CD4-positive, alpha-beta memory T cell (primary cell): ENCODE measurements at regions of chr9 and their contacts with region 1.

Region 1: DNA sequence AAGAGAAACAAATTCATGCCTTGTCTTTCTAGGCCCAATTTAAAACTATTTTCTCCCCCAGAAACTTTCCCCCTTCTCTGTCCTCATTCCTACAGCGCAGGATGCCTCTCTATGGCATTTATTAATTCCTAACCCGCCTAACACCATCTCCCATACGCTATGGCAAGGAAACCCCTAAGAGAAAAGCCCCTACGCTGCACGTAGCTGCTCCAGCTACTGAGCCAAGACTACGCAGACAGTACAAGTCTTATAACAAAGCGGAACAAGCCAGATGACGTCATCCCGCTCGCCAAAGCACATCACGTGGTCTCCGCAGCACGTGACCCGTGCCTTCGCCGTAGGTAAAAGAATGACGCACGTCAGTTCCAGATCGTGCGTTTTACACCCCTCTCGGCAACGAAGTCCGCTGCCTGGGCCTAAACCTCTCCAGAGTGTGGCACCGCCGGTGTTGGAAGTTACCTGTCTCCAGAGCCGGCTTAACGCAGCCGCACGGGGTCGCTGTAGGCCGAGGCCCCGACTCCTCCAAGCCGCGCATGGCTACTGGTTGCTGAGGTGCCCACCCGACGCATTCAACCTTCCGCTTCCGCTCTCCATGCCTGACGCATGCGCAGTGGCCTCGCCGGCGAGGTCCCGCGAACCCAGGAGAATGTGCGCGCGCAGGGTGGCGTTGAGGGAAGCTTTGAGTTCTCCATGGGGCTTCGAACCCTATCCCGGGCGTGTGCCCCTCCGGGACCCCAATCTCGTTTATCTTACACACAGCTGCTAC is at the start of gene TRMO:
- DNase-seq: peak; percentile 97 to 100 (median 98)
- H3K4me3 ChIP-seq: peak within 1 kb of the TSS; percentile 64 to 82
- H3K4me3 Mint-ChIP-seq: peak within 1 kb of the TSS; percentile 85 to 100 (median 94)
- H3K27ac ChIP-seq: peak within 1 kb of the TSS; percentile 90
- H3K27ac Mint-ChIP-seq: peak within 1 kb of the TSS; percentile 91 to 100 (median 100)
- H3K4me1 ChIP-seq: peaks cover 53% of the 10 kb centered on the region
- H3K4me1 Mint-ChIP-seq: peaks cover 26 to 54% (median 41%) of the 10 kb centered on the region in 4 donors
- H3K27me3 ChIP-seq: no peaks in the 10 kb centered on the region
- H3K27me3 Mint-ChIP-seq: peaks cover 0 to 1% of the 10 kb centered on the region in 2 donors
- total RNA-seq, gene TRMO: 51.6 to 59.5 TPM

Region 2: GRCh38 chr9:97604901-97605645 is 317.1 kb before region 1 on chr9:
- CTCF ChIA-PET with region 1: no interaction called
- POLR2A ChIA-PET with region 1: no interaction called
- intact Hi-C with region 1: no loop called
- DNase-seq: no peak
- H3K4me3 ChIP-seq: no peak overlapping the region
- H3K4me3 Mint-ChIP-seq: no peak overlapping the region
- H3K27ac ChIP-seq: no peak overlapping the region
- H3K27ac Mint-ChIP-seq: peak overlapping the region in 1 of 7 donors; percentile 48
- H3K4me1 ChIP-seq: no peaks in the 10 kb centered on the region
- H3K4me1 Mint-ChIP-seq: no peaks in the 10 kb centered on the region
- H3K27me3 ChIP-seq: no peaks in the 10 kb centered on the region
- H3K27me3 Mint-ChIP-seq: no peaks in the 10 kb centered on the region

Region 3: DNA sequence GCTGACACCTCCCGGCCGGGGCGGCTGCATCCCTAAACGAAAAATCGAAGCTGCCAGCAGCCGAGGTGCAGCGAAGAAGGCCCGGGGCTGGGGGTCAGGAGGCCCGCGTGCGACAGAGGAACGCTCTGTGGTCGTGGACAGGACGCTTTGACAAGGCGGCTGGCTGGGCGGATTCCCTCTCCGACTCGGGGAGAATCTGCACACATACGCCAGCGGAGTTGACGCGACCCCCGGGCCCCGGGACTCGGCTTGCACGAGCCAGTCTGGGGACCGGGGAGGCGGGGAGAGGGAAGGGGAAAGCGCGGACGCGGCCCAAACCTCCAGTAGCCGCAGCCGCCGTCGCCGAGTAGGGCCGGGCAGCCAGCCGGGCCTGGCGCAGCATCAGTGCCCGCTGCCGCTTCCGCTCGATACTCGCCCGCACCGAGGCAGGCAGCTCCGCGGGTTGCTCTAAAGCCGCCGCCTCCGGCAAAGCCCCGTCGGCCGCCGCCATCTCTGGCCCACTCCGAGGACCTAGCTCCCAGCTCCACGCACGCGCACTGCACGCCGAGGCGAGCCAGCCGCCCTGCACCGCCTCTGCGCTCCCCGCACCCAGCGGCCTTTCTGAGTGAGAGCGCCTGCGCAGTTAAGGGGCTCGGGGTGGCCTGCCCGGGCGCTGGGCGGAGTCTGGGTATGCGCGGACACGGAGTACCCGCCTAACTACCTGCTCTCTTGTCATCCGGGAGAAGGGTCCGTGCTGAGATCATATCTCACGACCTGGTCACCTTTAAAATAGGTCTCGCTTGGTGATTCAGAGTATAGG is 225.1 kb before region 1 on chr9 and contains the start of gene XPA:
- CTCF ChIA-PET with region 1: interaction called, 17 read pairs
- POLR2A ChIA-PET with region 1: interaction called, 26 read pairs
- intact Hi-C with region 1: no loop called
- DNase-seq: peak; percentile 96 to 97 (median 96)
- H3K4me3 ChIP-seq: peak within 1 kb of the TSS; percentile 4 to 82
- H3K4me3 Mint-ChIP-seq: peak within 1 kb of the TSS; percentile 86 to 96 (median 92)
- H3K27ac ChIP-seq: peak within 1 kb of the TSS; percentile 68
- H3K27ac Mint-ChIP-seq: peak within 1 kb of the TSS; percentile 86 to 98 (median 96)
- H3K4me1 ChIP-seq: peaks cover 44% of the 10 kb centered on the region
- H3K4me1 Mint-ChIP-seq: peaks cover 41 to 56% (median 49%) of the 10 kb centered on the region in 4 donors
- H3K27me3 ChIP-seq: no peaks in the 10 kb centered on the region
- H3K27me3 Mint-ChIP-seq: no peaks in the 10 kb centered on the region
- total RNA-seq, gene XPA: 24.0 to 25.5 TPM

Region 4: GRCh38 chr9:97740848-97741821 is 181.0 kb before region 1 on chr9:
- CTCF ChIA-PET with region 1: no interaction called
- POLR2A ChIA-PET with region 1: no interaction called
- intact Hi-C with region 1: no loop called
- DNase-seq: peak in 4 of 5 donors; percentile 12 to 17 (median 15)
- H3K4me3 ChIP-seq: no peak overlapping the region
- H3K4me3 Mint-ChIP-seq: peak overlapping the region; percentile 13 to 64 (median 52)
- H3K27ac ChIP-seq: no peak overlapping the region
- H3K27ac Mint-ChIP-seq: no peak overlapping the region
- H3K4me1 ChIP-seq: peaks cover 11% of the 10 kb centered on the region
- H3K4me1 Mint-ChIP-seq: peaks cover 1 to 11% (median 7%) of the 10 kb centered on the region in 4 donors
- H3K27me3 ChIP-seq: peaks cover 25% of the 10 kb centered on the region
- H3K27me3 Mint-ChIP-seq: peaks cover 36 to 56% of the 10 kb centered on the region in 2 donors

Region 5: GRCh38 chr9:97840521-97840920 is 81.6 kb before region 1 on chr9:
- CTCF ChIA-PET with region 1: no interaction called
- POLR2A ChIA-PET with region 1: no interaction called
- intact Hi-C with region 1: no loop called
- DNase-seq: no peak
- H3K4me3 ChIP-seq: no peak overlapping the region
- H3K4me3 Mint-ChIP-seq: no peak overlapping the region
- H3K27ac ChIP-seq: no peak overlapping the region
- H3K27ac Mint-ChIP-seq: no peak overlapping the region
- H3K4me1 ChIP-seq: no peaks in the 10 kb centered on the region
- H3K4me1 Mint-ChIP-seq: no peaks in the 10 kb centered on the region
- H3K27me3 ChIP-seq: peaks cover 14% of the 10 kb centered on the region
- H3K27me3 Mint-ChIP-seq: peaks cover 37 to 41% of the 10 kb centered on the region in 2 donors

Region 6: DNA sequence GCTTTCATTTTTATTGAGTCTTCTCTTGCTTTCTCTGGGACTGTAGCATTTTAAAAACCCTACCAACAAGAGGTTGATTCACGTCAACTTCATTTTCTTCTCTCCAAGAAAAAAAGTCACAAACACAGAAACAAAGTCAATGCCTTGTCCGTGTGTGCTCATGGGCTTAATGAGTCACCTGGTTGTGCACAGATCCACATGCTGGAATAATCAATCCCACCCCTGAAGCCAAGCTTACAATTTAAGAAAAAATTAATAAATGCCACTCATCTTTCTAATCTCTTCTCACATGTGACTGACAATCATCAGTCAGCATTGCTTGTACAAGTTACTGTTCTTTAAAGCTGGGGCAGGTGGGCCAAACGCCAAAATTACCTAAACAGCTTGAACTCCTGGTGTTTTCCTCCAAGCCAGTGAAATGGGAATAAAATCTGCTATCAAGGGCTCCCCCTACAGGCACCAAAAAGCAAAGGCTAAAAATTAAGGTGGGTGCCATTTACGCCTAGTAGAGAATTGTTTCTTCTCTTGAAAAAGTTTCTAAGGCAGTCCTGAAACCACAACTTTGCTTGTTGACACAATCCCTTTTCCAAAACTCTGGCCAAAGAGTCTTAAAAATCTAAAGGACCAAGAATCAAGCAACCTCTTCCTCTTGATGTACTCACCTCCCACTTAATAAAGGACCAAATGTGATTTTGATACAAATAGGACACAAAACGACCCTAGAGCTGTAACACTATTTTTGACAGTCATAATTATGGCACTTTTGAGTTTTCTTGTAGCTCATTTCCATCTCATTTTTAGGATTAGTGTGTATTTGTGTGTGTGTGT is 21.2 kb before region 1 on chr9:
- CTCF ChIA-PET with region 1: interaction called, 174 read pairs
- POLR2A ChIA-PET with region 1: interaction called, 746 read pairs
- intact Hi-C with region 1: loop called (anchors 1 kb)
- DNase-seq: peak; percentile 39 to 54 (median 43)
- H3K4me3 ChIP-seq: no peak overlapping the region
- H3K4me3 Mint-ChIP-seq: peak overlapping the region in 3 of 8 donors; percentile 20 to 59 (median 43)
- H3K27ac ChIP-seq: peak overlapping the region; percentile 21
- H3K27ac Mint-ChIP-seq: peak overlapping the region; percentile 75 to 93 (median 92)
- H3K4me1 ChIP-seq: peaks cover 59% of the 10 kb centered on the region
- H3K4me1 Mint-ChIP-seq: peaks cover 33 to 63% (median 45%) of the 10 kb centered on the region in 4 donors
- H3K27me3 ChIP-seq: no peaks in the 10 kb centered on the region
- H3K27me3 Mint-ChIP-seq: no peaks in the 10 kb centered on the region

Region 7: DNA sequence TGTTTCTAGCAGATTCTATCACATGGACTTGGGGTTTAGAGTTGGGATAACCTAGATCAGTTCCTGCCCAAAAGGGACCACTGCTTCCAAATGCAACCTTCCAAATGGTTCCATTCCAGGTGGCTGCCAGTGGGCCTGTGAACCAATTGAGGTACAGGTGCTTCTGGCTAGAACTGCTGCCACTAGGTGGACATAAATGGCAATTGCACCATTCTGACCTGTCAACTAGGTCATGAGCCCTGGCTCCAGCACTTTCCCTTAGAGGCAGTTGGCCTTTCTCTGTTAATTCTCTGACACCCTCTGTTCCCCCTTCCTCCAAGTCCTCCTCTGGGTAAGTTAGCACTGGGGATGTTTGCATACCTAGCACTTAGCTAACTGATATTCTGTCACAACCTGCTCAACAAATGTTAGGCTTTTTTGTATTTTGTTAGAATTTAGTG is 32.4 kb after region 1 on chr9:
- CTCF ChIA-PET with region 1: interaction called, 256 read pairs
- POLR2A ChIA-PET with region 1: interaction called, 47 read pairs
- intact Hi-C with region 1: loop called (anchors 1 kb)
- DNase-seq: peak; percentile 60 to 65 (median 64)
- H3K4me3 ChIP-seq: no peak overlapping the region
- H3K4me3 Mint-ChIP-seq: no peak overlapping the region
- H3K27ac ChIP-seq: no peak overlapping the region
- H3K27ac Mint-ChIP-seq: no peak overlapping the region
- H3K4me1 ChIP-seq: peaks cover 6% of the 10 kb centered on the region
- H3K4me1 Mint-ChIP-seq: peaks cover 0 to 10% (median 2%) of the 10 kb centered on the region in 4 donors
- H3K27me3 ChIP-seq: no peaks in the 10 kb centered on the region
- H3K27me3 Mint-ChIP-seq: no peaks in the 10 kb centered on the region

Region 8: GRCh38 chr9:98034593-98035546 is 112.7 kb after region 1 on chr9:
- CTCF ChIA-PET with region 1: interaction called, 121 read pairs
- POLR2A ChIA-PET with region 1: interaction called, 28 read pairs
- intact Hi-C with region 1: loop called (anchors 1 kb)
- DNase-seq: peak; percentile 80 to 88 (median 84)
- H3K4me3 ChIP-seq: no peak overlapping the region
- H3K4me3 Mint-ChIP-seq: peak overlapping the region in 3 of 8 donors; percentile 32 to 64 (median 38)
- H3K27ac ChIP-seq: no peak overlapping the region
- H3K27ac Mint-ChIP-seq: peak overlapping the region in 5 of 7 donors; percentile 28 to 64 (median 61)
- H3K4me1 ChIP-seq: peaks cover 6% of the 10 kb centered on the region
- H3K4me1 Mint-ChIP-seq: peaks cover 6 to 9% (median 6%) of the 10 kb centered on the region in 4 donors
- H3K27me3 ChIP-seq: no peaks in the 10 kb centered on the region
- H3K27me3 Mint-ChIP-seq: peaks cover 1 to 4% of the 10 kb centered on the region in 2 donors

Region 9: DNA sequence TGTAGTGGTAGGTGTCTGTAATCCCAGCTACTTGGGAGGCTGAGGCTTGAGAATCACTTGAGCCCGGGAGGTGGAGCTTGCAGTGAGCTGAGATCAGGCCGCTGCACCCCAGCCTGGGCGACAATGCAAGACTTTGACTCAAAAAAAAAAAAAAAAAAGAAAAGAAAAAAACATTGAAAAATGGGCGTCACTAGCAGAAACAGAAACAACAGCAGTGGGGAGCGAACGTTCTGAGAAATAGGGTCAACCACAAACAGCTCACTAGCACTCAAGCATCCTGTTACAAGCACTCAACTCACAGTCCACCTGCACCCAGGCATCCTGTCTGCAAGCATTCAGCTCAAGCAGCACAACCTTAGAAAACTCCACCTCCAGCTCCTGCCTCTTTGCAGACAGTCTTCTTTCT is 179.7 kb after region 1 on chr9:
- CTCF ChIA-PET with region 1: interaction called, 3 read pairs
- POLR2A ChIA-PET with region 1: interaction called, 15 read pairs
- intact Hi-C with region 1: no loop called
- DNase-seq: peak; percentile 85 to 95 (median 94)
- H3K4me3 ChIP-seq: peak overlapping the region in 1 of 2 donors; percentile 40
- H3K4me3 Mint-ChIP-seq: peak overlapping the region; percentile 67 to 85 (median 78)
- H3K27ac ChIP-seq: peak overlapping the region; percentile 64
- H3K27ac Mint-ChIP-seq: peak overlapping the region; percentile 91 to 98 (median 94)
- H3K4me1 ChIP-seq: peaks cover 99% of the 10 kb centered on the region
- H3K4me1 Mint-ChIP-seq: peaks cover 58 to 94% (median 77%) of the 10 kb centered on the region in 4 donors
- H3K27me3 ChIP-seq: no peaks in the 10 kb centered on the region
- H3K27me3 Mint-ChIP-seq: no peaks in the 10 kb centered on the region

Region 10: GRCh38 chr9:98263482-98264357 is 341.6 kb after region 1 on chr9:
- CTCF ChIA-PET with region 1: interaction called, 7 read pairs
- POLR2A ChIA-PET with region 1: interaction called, 3 read pairs
- intact Hi-C with region 1: loop called (anchors 1 kb)
- DNase-seq: peak; percentile 78 to 84 (median 80)
- H3K4me3 ChIP-seq: no peak overlapping the region
- H3K4me3 Mint-ChIP-seq: no peak overlapping the region
- H3K27ac ChIP-seq: no peak overlapping the region
- H3K27ac Mint-ChIP-seq: peak overlapping the region in 2 of 7 donors; percentile 31 to 63
- H3K4me1 ChIP-seq: no peaks in the 10 kb centered on the region
- H3K4me1 Mint-ChIP-seq: peaks cover 0 to 5% (median 3%) of the 10 kb centered on the region in 4 donors
- H3K27me3 ChIP-seq: no peaks in the 10 kb centered on the region
- H3K27me3 Mint-ChIP-seq: peaks cover 0 to 6% of the 10 kb centered on the region in 2 donors